ENCODE measurements at regions of chr22 and their contacts with region 1.

Region 1: GRCh38 chr22:41688365-41689211 is at the start of gene SNU13:
- DNase-seq: peak; percentile 92 to 96 (median 94)
- ATAC-seq: peak; percentile 92 to 98 (median 98)
- H3K4me3 ChIP-seq: peak within 1 kb of the TSS; percentile 66 to 95 (median 84)
- H3K27ac ChIP-seq: peak within 1 kb of the TSS; percentile 88 to 99 (median 94)
- H3K4me1 ChIP-seq: peaks cover 0 to 26% (median 17%) of the 10 kb centered on the region in 12 donors
- H3K27me3 ChIP-seq: no peaks in the 10 kb centered on the region
- CTCF ChIP-seq: peak in 2 of 12 donors; percentile 16 to 25
- POLR2A ChIP-seq: peak; percentile 37 to 75
- total RNA-seq, gene SNU13: 168 to 233 (median 201) TPM

Region 2: GRCh38 chr22:41512421-41513194 is 176.0 kb before region 1 on chr22:
- intact Hi-C with region 1: no loop called
- DNase-seq: peak in 2 of 5 donors; percentile 60 to 68
- ATAC-seq: peak; percentile 17 to 61 (median 56)
- H3K4me3 ChIP-seq: no peak overlapping the region
- H3K27ac ChIP-seq: peak overlapping the region in 11 of 12 donors; percentile 14 to 89 (median 73)
- H3K4me1 ChIP-seq: peaks cover 0 to 74% (median 29%) of the 10 kb centered on the region in 12 donors
- H3K27me3 ChIP-seq: no peaks in the 10 kb centered on the region
- CTCF ChIP-seq: no peak
- POLR2A ChIP-seq: no peak

Region 3: DNA sequence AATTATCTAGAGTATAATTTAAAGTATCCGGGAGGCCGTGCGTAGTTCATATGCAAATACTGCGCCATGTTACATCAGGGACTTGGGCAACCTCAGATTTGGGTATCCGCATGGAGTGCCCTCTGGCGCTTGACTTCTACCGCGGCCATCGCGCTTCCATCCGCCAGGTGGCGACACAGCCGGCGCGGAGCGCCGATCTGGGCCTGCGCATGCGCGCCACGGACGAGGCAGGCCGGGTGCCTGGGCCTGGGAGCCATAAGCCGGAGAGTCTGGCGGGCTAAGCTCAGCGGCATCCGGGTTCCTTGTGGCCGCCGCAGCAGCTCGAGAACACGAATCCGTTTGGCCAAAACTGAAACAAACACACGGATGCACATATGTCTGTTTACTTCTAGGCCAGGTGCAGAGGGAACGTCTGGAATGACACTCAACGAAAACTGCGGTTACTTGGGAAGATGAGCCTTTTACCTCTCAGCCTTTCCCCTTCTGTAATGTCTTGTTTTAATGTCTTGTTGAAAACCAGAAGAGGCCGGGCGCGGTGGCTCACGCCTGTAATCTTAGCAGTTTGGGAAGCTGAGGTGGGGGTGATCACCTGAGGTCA is 21.8 kb before region 1 on chr22:
- intact Hi-C with region 1: loop called in 1 of 10 experiments (anchors 2 kb)
- DNase-seq: peak; percentile 88 to 96 (median 91)
- ATAC-seq: peak; percentile 72 to 93 (median 89)
- H3K4me3 ChIP-seq: peak overlapping the region; percentile 7 to 60 (median 45)
- H3K27ac ChIP-seq: peak overlapping the region; percentile 74 to 94 (median 88)
- H3K4me1 ChIP-seq: peaks cover 0 to 19% (median 5%) of the 10 kb centered on the region in 12 donors
- H3K27me3 ChIP-seq: no peaks in the 10 kb centered on the region
- CTCF ChIP-seq: peak; percentile 94 to 100 (median 98)
- POLR2A ChIP-seq: peak in 1 of 2 donors; percentile 77

Region 4: GRCh38 chr22:41822317-41823060 is 133.9 kb after region 1 on chr22:
- intact Hi-C with region 1: loop called in 3 of 10 experiments (anchors 5 to 10 kb)
- DNase-seq: no peak
- ATAC-seq: peak in 2 of 4 donors; percentile 16 to 26
- H3K4me3 ChIP-seq: no peak overlapping the region
- H3K27ac ChIP-seq: no peak overlapping the region
- H3K4me1 ChIP-seq: peaks cover 3 to 29% (median 22%) of the 10 kb centered on the region in 12 donors
- H3K27me3 ChIP-seq: no peaks in the 10 kb centered on the region
- CTCF ChIP-seq: peak; percentile 18 to 61 (median 48)
- POLR2A ChIP-seq: no peak

Region 5: DNA sequence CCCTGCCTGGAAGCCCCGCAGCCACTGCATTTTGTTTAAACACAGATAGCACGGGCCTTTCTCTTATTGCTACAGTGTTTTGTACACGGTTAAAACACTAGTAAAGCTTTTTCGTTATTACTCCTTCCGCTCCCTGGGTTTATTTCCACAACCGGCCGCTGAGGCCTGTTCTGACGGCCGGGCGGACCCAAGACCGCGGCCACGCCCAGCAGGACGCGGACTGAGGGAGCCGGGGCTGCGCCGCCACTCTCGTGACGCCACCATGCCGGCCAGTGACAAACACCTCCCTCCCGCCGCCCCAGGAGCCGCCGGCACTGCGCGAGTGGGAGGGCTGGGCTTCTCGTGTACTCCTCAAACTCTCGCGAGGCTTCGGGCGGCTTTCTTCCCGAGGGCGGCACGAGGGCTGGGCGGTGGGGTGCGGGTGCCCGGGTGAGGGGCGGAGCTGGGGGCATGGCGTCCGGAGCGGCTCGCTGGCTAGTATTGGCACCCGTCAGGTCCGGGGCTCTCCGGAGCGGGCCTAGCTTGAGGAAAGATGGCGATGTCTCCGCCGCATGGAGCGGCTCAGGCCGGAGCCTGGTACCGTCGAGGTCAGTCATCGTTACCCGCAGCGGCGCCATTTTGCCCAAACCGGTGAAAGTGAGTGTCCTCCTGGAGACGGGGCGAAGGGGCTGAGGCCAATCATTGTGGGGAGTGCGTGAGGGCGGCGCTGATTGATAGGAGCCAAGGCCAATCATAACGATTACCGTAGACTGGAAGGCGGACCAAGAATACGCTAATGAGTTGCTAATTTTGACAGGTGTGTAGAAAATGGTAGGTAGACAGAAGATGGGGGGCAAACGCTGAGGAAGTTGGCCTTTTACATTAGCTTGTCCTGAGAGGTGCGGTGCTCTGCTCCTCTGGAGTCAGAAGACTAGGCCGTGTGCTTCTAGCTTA is 391.0 kb after region 1 on chr22 and contains the start of gene SMDT1:
- intact Hi-C with region 1: loop called in 1 of 10 experiments (anchors 10 kb)
- DNase-seq: peak; percentile 100
- ATAC-seq: peak; percentile 91 to 95 (median 93)
- H3K4me3 ChIP-seq: peak within 1 kb of the TSS; percentile 43 to 82 (median 70)
- H3K27ac ChIP-seq: peak within 1 kb of the TSS; percentile 95 to 99 (median 98)
- H3K4me1 ChIP-seq: peaks cover 2 to 57% (median 33%) of the 10 kb centered on the region in 12 donors
- H3K27me3 ChIP-seq: no peaks in the 10 kb centered on the region
- CTCF ChIP-seq: no peak
- POLR2A ChIP-seq: peak; percentile 52 to 96
- total RNA-seq, gene SMDT1: 15.3 to 179 (median 115) TPM